Activated naive CD4-positive, alpha-beta T cell treated with anti-CD3 and anti-CD28 coated beads for 36 hours (primary cell): ENCODE measurements at regions of chr22 and their contacts with region 1.

Region 1: GRCh38 chr22:25057013-25057881 is 104.7 kb downstream of the KIAA1671 start:
- DNase-seq: peak; percentile 91
- H3K4me3 Mint-ChIP-seq: no peak overlapping the region
- H3K27ac Mint-ChIP-seq: no peak overlapping the region
- H3K4me1 Mint-ChIP-seq: peaks cover 49% of the 10 kb centered on the region
- H3K27me3 Mint-ChIP-seq: no peaks in the 10 kb centered on the region

Region 2: DNA sequence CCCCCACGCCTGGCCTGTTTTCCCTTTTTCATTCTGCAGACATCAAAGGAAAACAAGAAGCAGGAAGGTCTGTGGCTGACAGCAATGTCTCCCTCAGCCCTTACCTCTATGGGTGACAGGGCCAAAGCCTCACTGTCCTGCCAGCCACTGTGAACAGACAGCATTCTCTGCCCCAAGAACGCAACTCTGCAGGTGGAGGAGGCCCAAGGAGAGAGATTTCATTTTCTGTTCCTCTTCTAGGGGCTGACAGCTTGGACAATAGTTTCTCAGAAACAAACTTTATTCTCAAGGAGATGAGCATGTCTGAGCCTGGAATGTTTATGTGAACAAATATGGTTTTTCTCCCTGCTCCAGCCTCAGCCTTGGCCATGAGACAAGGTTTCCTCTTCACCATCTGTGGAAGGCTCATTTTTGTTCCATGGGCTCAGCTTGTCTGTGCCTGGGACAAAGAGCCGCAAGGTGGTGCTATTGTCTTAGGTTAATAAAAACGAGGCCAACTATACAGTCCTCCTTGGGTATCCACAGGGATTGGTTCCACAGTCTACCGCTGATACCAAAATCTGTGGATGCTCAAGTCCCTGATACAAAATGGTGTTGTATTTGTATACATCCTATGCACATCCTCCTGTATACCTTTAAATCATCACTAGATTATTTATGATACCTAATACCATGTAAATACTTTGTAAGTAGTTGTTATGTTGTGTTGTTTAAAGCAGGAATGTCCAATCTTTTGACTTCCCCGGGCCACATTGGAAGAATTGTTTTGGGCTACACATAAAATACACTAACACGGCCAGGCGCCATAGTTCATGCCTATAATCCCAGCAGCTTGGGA is 288.5 kb before region 1 on chr22:
- CTCF ChIA-PET with region 1: interaction called, 7 read pairs
- intact Hi-C with region 1: loop called (anchors 2 kb)
- DNase-seq: peak; percentile 68
- H3K4me3 Mint-ChIP-seq: no peak overlapping the region
- H3K27ac Mint-ChIP-seq: no peak overlapping the region
- H3K4me1 Mint-ChIP-seq: no peaks in the 10 kb centered on the region
- H3K27me3 Mint-ChIP-seq: peaks cover under 1% of the 10 kb centered on the region

Region 3: DNA sequence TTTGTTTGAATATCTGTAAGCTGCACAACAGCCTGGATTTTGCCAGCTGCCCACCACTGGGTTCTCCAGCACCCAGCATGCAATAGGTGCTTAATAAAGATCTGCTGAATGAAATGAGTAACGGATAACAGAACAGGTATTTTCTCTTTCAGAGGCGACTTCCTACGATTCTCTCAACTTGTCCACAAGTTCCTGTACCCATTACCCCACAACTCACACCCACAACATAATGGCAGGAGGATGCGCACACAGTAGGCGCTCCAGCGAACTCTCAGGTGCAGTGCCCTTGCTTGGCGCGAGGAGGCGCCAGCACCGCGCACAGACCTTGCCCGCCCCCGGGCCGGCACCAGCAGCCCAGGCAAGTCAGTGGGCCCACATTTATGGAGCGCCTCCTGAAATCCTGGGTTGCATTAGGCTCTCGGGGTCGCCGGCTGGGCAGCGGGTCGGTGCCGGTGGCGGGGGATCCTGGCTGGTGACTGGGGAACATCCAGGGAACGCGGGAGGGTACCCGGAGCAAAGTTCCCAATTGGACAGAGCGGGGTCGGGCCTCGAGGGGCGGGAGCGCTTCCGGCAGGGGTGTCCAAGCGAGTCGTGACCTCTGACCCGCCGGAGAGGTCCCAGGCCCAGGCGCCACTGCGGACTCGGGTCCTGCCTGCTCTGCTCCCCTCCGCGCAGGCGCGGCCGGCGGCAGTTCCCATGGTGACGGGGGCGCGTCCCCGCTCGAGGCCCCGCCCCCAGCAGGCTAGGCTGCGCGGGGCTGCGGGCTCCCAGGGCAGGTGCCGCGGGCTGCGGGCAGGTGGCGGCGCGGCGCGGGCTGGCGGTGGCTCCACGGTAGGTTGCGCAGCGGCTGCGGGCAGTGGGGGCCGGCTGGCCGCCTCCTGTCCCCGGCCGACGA is 105.1 kb before region 1 on chr22 and contains the start of gene KIAA1671:
- CTCF ChIA-PET with region 1: interaction called, 3 read pairs
- intact Hi-C with region 1: loop called (anchors 1 kb)
- DNase-seq: peak; percentile 87
- H3K4me3 Mint-ChIP-seq: peak within 1 kb of the TSS; percentile 76
- H3K27ac Mint-ChIP-seq: no peak within 1 kb of the TSS
- H3K4me1 Mint-ChIP-seq: peaks cover 5% of the 10 kb centered on the region
- H3K27me3 Mint-ChIP-seq: peaks cover 49% of the 10 kb centered on the region
- total RNA-seq, gene KIAA1671: 7.3 to 7.4 TPM

Region 4: GRCh38 chr22:25013607-25014006 is 43.6 kb before region 1 on chr22:
- CTCF ChIA-PET with region 1: no interaction called
- intact Hi-C with region 1: no loop called
- DNase-seq: no peak
- H3K4me3 Mint-ChIP-seq: no peak overlapping the region
- H3K27ac Mint-ChIP-seq: no peak overlapping the region
- H3K4me1 Mint-ChIP-seq: no peaks in the 10 kb centered on the region
- H3K27me3 Mint-ChIP-seq: peaks cover 5% of the 10 kb centered on the region

Region 5: DNA sequence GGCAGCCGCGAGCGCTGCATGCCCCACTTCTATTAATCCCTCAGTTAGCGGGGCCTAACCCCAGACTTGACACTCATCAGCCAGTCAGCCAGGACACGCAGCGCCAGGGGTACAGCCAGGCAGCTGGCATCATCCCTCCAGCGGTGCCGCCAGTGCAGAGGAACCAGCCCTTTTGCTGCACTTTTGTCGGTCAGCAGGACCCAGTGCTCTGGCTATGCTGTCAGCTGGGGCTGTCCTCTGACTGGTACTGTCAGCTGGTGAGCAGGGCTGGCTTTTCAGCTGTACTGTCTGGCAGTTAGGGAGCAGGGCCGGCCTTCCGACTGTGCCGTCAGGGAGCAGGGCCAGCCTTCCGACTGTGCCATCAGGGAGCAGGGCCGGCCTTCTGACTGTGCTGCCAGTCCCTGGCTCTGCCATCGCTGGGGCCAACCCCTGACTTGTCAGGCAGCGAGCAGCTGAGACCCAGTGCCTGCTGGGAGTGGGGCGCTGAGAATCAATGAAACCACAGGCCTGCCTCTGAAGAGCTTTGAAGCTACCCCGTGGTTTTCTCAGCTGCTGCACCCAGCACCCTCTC is 10.7 kb after region 1 on chr22:
- CTCF ChIA-PET with region 1: interaction called, 11 read pairs
- intact Hi-C with region 1: loop called (anchors 1 kb)
- DNase-seq: peak; percentile 91
- H3K4me3 Mint-ChIP-seq: peak overlapping the region; percentile 79
- H3K27ac Mint-ChIP-seq: peak overlapping the region; percentile 90
- H3K4me1 Mint-ChIP-seq: peaks cover 85% of the 10 kb centered on the region
- H3K27me3 Mint-ChIP-seq: no peaks in the 10 kb centered on the region

Region 6: DNA sequence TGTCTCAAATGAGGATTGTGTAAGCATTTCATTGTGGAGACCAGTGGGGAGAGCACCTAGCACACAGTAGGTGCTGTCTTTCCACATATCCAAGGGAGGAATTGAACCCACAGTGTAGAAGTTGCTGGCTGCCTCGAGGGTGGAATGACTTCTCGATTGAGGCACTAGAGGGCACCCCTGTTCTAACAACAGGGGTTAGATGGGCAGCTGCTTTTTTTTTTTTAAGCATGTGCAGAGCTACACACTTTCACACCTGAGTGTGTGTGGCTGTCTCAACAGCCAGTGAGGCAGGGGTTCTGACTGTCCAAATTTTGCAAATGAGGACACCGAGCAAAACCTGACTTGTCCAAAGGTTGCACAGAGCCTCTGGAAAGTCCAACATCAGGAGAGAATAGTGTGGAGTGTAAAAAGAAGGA is 24.2 kb after region 1 on chr22:
- CTCF ChIA-PET with region 1: interaction called, 20 read pairs
- intact Hi-C with region 1: loop called (anchors 1 kb)
- DNase-seq: peak; percentile 82
- H3K4me3 Mint-ChIP-seq: no peak overlapping the region
- H3K27ac Mint-ChIP-seq: no peak overlapping the region
- H3K4me1 Mint-ChIP-seq: peaks cover 51% of the 10 kb centered on the region
- H3K27me3 Mint-ChIP-seq: no peaks in the 10 kb centered on the region

Region 7: DNA sequence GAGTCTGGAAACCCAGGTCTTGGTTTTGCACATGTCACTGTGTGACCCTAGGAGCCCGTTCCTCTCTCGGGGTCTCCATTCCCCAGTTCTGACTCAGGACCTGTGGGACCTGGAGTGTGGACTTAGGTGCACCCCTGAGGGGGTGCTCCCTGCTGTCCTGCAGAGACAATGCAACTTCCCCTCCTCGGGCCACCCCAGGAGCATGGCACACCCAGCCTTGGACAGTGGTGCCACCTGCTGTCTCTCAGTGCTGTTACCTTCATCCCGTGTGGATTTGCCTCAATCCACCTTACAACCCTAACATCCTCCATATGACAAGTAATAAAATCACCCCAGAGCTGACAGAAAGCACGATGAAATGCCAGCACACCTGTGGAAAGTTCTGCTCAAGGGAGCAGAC is 114.9 kb after region 1 on chr22:
- CTCF ChIA-PET with region 1: interaction called, 5 read pairs
- intact Hi-C with region 1: loop called (anchors 1 kb)
- DNase-seq: peak; percentile 65
- H3K4me3 Mint-ChIP-seq: no peak overlapping the region
- H3K27ac Mint-ChIP-seq: no peak overlapping the region
- H3K4me1 Mint-ChIP-seq: no peaks in the 10 kb centered on the region
- H3K27me3 Mint-ChIP-seq: no peaks in the 10 kb centered on the region